PC-3 (cell line): ENCODE measurements at regions of chr3 and their contacts with region 1.

Region 1: DNA sequence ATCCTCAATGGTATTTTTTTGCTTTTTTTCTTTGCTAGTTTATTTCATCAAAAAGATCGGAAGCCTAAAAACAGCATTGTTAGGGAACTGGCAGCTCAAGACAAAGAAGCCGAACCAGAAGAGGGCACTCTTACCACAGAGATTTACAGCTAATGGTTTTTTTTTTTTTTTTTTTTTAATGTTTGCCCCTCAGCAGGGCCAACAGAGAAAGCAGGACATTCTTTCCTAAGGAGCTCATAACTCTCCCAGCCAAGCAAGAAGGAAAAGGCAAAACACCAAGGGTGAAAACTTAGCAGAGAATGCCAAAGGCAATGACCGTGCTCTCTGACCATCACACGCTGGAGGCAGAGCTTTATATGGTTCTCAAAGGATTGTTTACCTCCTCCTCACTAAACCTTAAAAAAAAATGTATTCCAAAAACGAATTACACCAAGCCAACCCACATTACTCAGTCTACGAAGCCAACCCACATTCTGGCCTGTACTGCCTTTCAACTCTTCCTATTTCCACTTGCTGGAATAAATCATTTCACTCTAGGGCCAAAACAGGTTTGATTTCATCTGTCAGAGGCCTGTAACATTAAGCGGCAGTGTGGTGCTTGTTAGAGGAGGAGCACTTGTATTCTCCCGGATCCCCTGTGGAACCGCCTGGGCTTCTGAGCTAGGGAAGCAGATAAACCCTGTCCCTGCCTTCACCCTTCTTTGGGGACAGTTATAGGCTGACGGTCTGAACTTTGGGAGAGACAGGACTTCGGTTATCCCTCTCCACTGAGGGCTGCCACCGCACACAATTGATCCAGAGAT is 35.6 kb upstream of the GYG1 start:
- DNase-seq: peak; percentile 68
- ATAC-seq: peak; percentile 53
- H3K4me3 ChIP-seq: peak overlapping the region; percentile 29; the same call in 1 of the 2 replicates
- H3K27ac ChIP-seq: no peak overlapping the region
- H3K4me1 ChIP-seq: peaks cover 17% of the 10 kb centered on the region
- H3K27me3 ChIP-seq: no peaks in the 10 kb centered on the region
- CTCF ChIP-seq: peak; percentile 87

Region 2: GRCh38 chr3:148974726-148975125 is 19.0 kb after region 1 on chr3:
- CTCF ChIA-PET with region 1: no interaction called
- POLR2A ChIA-PET with region 1: no interaction called
- intact Hi-C with region 1: no loop called
- DNase-seq: no peak
- ATAC-seq: no peak
- H3K4me3 ChIP-seq: no peak overlapping the region
- H3K27ac ChIP-seq: no peak overlapping the region
- H3K4me1 ChIP-seq: no peaks in the 10 kb centered on the region
- H3K27me3 ChIP-seq: no peaks in the 10 kb centered on the region
- CTCF ChIP-seq: no peak

Region 3: GRCh38 chr3:149085828-149086231 is 130.1 kb after region 1 on chr3:
- CTCF ChIA-PET with region 1: no interaction called
- POLR2A ChIA-PET with region 1: no interaction called
- intact Hi-C with region 1: loop called (anchors 2 kb)
- DNase-seq: peak; percentile 46
- ATAC-seq: peak; percentile 50
- H3K4me3 ChIP-seq: peak overlapping the region; percentile 98
- H3K27ac ChIP-seq: no peak overlapping the region
- H3K4me1 ChIP-seq: peaks cover 16% of the 10 kb centered on the region
- H3K27me3 ChIP-seq: no peaks in the 10 kb centered on the region
- CTCF ChIP-seq: no peak

Region 4: GRCh38 chr3:149180057-149180573 is 224.4 kb after region 1 on chr3:
- CTCF ChIA-PET with region 1: interaction called, 10 read pairs
- POLR2A ChIA-PET with region 1: interaction called, 5 read pairs
- intact Hi-C with region 1: no loop called
- DNase-seq: peak; percentile 99
- ATAC-seq: peak; percentile 97
- H3K4me3 ChIP-seq: no peak overlapping the region
- H3K27ac ChIP-seq: peak overlapping the region; percentile 84
- H3K4me1 ChIP-seq: peaks cover 26% of the 10 kb centered on the region
- H3K27me3 ChIP-seq: no peaks in the 10 kb centered on the region
- CTCF ChIP-seq: no peak

Region 5: GRCh38 chr3:149339931-149340309 is 384.2 kb after region 1 on chr3:
- CTCF ChIA-PET with region 1: interaction called, 17 read pairs
- POLR2A ChIA-PET with region 1: no interaction called
- intact Hi-C with region 1: no loop called
- DNase-seq: peak; percentile 99
- ATAC-seq: peak; percentile 90
- H3K4me3 ChIP-seq: peak overlapping the region; percentile 55
- H3K27ac ChIP-seq: peak overlapping the region; percentile 96
- H3K4me1 ChIP-seq: peaks cover 50% of the 10 kb centered on the region
- H3K27me3 ChIP-seq: no peaks in the 10 kb centered on the region
- CTCF ChIP-seq: no peak

Region 6: DNA sequence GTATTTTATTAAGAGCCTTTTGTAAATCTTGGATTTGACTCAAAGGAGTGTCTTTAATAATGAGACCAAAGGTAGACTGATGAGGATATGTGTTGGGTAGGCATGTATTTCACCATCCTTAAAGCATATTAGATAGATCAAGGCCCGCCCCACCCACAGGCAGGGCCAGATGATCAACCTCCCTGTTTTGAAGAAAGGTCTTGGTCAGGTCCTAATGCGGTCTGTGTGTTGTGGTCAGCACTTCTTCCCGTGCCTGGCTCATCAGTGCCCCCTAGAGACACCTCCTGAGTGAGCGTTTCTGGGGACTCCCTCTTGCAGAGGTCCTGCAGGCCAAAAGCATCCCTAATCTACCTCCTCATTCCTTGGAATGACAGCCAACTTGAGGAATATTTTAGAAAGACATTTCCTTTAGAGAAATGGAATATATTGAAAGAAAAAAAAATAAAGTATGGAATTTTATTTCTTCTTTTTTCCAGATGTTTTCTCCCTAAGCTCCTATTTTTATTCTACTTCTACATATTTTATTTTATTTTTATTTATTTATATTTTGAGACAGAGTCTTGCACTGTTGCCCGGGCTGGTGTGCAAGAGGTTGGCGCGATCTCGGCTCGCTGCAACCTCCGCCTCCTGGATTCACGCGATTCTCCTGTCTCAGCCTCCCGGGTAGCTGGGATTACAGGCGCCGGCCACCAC is 524.7 kb after region 1 on chr3:
- CTCF ChIA-PET with region 1: interaction called, 9 read pairs
- POLR2A ChIA-PET with region 1: no interaction called
- intact Hi-C with region 1: loop called (anchors 1 kb)
- DNase-seq: peak; percentile 94
- ATAC-seq: peak; percentile 96
- H3K4me3 ChIP-seq: no peak overlapping the region
- H3K27ac ChIP-seq: peak overlapping the region; percentile 55
- H3K4me1 ChIP-seq: peaks cover 17% of the 10 kb centered on the region
- H3K27me3 ChIP-seq: no peaks in the 10 kb centered on the region
- CTCF ChIP-seq: peak; percentile 98